Panc1 (cell line): ENCODE measurements at regions of chr1 and their contacts with region 1.

Region 1: GRCh38 chr1:168401341-168401740 is 120.7 kb downstream of the TBX19 start:
- DNase-seq: no peak
- ATAC-seq: no peak
- H3K4me3 ChIP-seq: no peak overlapping the region
- H3K27ac ChIP-seq: no peak overlapping the region
- H3K4me1 ChIP-seq: peaks cover 2% of the 10 kb centered on the region; the same call in 1 of the 2 replicates
- H3K27me3 ChIP-seq: peaks cover 3% of the 10 kb centered on the region
- CTCF ChIP-seq: no peak

Region 2: DNA sequence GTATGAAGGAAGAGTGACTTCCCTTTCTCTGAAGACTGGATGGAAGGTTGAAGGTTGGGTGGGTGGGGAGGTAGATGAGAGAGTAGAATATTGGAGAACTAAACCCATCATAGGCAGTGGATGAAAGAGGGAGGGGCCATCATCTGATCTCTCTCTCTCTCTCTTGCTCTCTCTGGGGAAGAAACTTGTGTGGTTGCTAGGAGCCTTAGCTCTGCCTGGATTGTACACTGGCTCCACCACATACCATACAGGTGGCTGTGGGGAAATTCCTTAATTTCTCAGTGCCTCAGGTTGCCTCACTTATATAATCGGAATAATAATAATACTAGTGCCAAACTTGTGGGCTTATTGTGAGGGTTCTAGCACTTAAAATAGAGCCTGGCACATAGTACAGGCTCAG is 184.6 kb after region 1 on chr1:
- CTCF ChIA-PET with region 1: no interaction called
- POLR2A ChIA-PET with region 1: interaction called, 14 read pairs
- in situ Hi-C with region 1: no loop called
- intact Hi-C with region 1: no loop called
- DNase-seq: no peak
- ATAC-seq: no peak
- H3K4me3 ChIP-seq: no peak overlapping the region
- H3K27ac ChIP-seq: no peak overlapping the region
- H3K4me1 ChIP-seq: no peaks in the 10 kb centered on the region
- H3K27me3 ChIP-seq: no peaks in the 10 kb centered on the region
- CTCF ChIP-seq: no peak